ENCODE measurements at regions of chr20 and their contacts with region 1.

Region 1: GRCh38 chr20:22691369-22692118 is 107.2 kb upstream of the FOXA2 start:
- DNase-seq: peak; percentile 59 to 66
- ATAC-seq: peak; percentile 89

Region 2: GRCh38 chr20:22815603-22816315 is 124.2 kb after region 1 on chr20:
- intact Hi-C with region 1: no loop called
- DNase-seq: no peak
- ATAC-seq: no peak

Region 3: DNA sequence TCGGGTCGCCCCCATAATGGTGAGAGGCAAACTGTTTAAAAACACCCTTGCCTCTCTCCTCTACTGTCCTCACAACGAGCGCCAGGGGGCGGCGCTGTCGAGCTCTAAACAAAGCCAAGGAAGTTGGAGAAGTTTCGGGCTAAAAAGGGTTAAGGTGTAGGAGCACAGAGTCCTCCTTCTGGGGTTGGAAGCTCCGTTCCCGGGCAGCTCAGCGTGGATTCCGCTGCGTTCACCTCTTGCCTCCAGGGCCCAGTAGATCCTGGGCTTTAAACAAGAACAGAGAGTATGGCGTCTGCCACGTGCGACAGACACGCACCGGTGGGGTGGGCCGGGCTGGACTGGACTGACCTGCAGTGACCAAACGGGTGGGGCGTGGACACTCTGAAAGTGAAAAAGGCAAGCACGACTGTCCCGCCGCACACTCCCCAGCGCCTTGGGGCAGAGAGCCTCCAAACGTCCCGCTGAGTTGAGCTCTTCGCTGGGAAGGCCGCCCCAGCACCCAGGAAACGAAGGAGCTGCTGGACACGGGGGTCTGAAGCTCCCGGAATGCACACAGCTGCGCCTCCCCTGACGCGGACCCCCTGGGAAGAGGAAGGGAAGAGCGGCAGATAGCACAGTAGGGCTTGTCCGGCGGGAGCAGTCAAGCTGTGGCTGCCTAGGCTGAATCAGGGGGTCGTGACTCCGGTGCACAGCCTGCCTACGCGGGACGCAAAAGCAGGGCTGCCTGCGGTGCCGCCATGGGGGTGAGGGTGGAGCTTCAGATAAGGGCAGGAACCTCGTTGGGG is 359.5 kb after region 1 on chr20:
- intact Hi-C with region 1: loop called in 1 of 2 experiments (anchors 10 kb)
- DNase-seq: peak; percentile 33 to 65
- ATAC-seq: peak; percentile 28

Region 4: DNA sequence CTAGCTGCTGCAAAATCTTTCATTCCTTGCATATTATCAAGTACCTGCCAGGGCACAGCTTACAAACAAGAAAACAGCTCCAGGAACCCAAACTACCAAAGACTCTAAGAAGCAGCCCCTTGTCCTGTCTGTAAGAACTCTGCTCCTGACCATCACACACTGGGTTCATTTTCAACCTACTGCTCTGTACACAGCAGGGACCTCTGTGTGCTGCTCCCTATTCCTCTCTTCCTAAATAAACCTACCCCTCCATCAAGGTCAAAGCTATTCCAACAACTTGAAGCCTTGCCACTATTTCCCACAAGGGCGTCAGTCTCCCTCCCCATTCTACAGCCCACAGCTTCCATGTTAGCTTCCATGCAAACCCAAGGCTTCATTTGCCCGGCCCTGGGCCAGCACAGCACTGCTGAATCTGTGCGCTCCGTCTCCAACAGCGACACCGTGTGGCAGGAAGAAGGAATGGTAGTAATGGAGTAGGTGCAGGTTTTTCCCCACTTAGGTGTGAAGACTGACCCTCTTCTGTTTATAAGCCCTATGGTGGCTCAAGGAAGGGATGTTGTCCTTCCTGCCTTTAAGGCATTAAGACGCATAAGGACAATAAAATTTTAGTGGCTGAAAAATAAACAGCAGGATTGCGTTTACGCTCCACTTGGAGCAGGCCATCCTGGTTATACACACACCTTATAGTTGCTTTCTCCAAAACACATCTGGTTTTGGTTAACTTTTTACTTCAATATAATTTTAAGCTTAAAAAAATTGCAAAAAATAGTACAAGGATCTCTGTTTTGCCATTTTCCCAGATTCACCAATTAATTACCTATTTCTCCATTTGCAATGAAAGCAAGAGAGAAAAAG is 543.9 kb after region 1 on chr20:
- intact Hi-C with region 1: loop called in 1 of 2 experiments (anchors 5 kb)
- DNase-seq: peak in 1 of 2 donors; percentile 53
- ATAC-seq: peak; percentile 69